HCT116 (cell line): ENCODE measurements at regions of chr16 and their contacts with region 1.

Region 1: GRCh38 chr16:15548482-15548891 is 94.5 kb downstream of the MARF1 start:
- DNase-seq: no peak
- ATAC-seq: no peak
- H3K4me3 ChIP-seq: no peak overlapping the region
- H3K27ac ChIP-seq: peak overlapping the region; percentile 10; the same call in 1 of the 2 replicates
- H3K4me1 ChIP-seq: peaks cover 11 to 66% of the 10 kb centered on the region in 2 experiments
- H3K27me3 ChIP-seq: no peaks in the 10 kb centered on the region
- CTCF ChIP-seq: no peak
- POLR2A ChIP-seq: no peak
- RAD21 ChIP-seq: no peak

Region 2: GRCh38 chr16:15398618-15399316 is 149.7 kb before region 1 on chr16:
- CTCF ChIA-PET with region 1: no interaction called
- POLR2A ChIA-PET with region 1: no interaction called
- RAD21 ChIA-PET with region 1: no interaction called
- intact Hi-C with region 1: no loop called
- DNase-seq: no peak
- ATAC-seq: no peak
- H3K4me3 ChIP-seq: no peak overlapping the region
- H3K27ac ChIP-seq: no peak overlapping the region
- H3K4me1 ChIP-seq: no peaks in the 10 kb centered on the region
- H3K27me3 ChIP-seq: no peaks in the 10 kb centered on the region
- CTCF ChIP-seq: no peak
- POLR2A ChIP-seq: no peak
- RAD21 ChIP-seq: no peak

Region 3: GRCh38 chr16:15434425-15435215 is 113.9 kb before region 1 on chr16 and contains the start of gene BMERB1:
- CTCF ChIA-PET with region 1: no interaction called
- POLR2A ChIA-PET with region 1: no interaction called
- RAD21 ChIA-PET with region 1: no interaction called
- intact Hi-C with region 1: no loop called
- DNase-seq: peak; percentile 12
- ATAC-seq: peak; percentile 76
- H3K4me3 ChIP-seq: peak within 1 kb of the TSS; percentile 68 to 71
- H3K27ac ChIP-seq: no peak within 1 kb of the TSS; the same call in 1 of the 2 replicates
- H3K4me1 ChIP-seq: peaks cover 18 to 34% of the 10 kb centered on the region in 2 experiments
- H3K27me3 ChIP-seq: no peaks in the 10 kb centered on the region
- CTCF ChIP-seq: no peak
- POLR2A ChIP-seq: no peak
- RAD21 ChIP-seq: no peak
- total RNA-seq, gene BMERB1: 43.6 TPM

Region 4: GRCh38 chr16:15559176-15559575 is 10.7 kb after region 1 on chr16:
- CTCF ChIA-PET with region 1: interaction called, 12 read pairs
- POLR2A ChIA-PET with region 1: interaction called, 3 read pairs
- RAD21 ChIA-PET with region 1: interaction called in 1 of 2 experiments, 3 read pairs
- intact Hi-C with region 1: no loop called
- DNase-seq: no peak
- ATAC-seq: no peak
- H3K4me3 ChIP-seq: no peak overlapping the region
- H3K27ac ChIP-seq: no peak overlapping the region
- H3K4me1 ChIP-seq: peaks cover 5 to 9% of the 10 kb centered on the region in 2 experiments; a peak in 3 of 4 replicates
- H3K27me3 ChIP-seq: no peaks in the 10 kb centered on the region
- CTCF ChIP-seq: no peak
- POLR2A ChIP-seq: no peak
- RAD21 ChIP-seq: no peak

Region 5: GRCh38 chr16:15564604-15565339 is 16.3 kb after region 1 on chr16:
- CTCF ChIA-PET with region 1: interaction called, 12 read pairs
- POLR2A ChIA-PET with region 1: interaction called, 3 read pairs
- RAD21 ChIA-PET with region 1: interaction called in 1 of 2 experiments, 3 read pairs
- intact Hi-C with region 1: no loop called
- DNase-seq: no peak
- ATAC-seq: no peak
- H3K4me3 ChIP-seq: no peak overlapping the region
- H3K27ac ChIP-seq: no peak overlapping the region
- H3K4me1 ChIP-seq: peaks cover 5 to 10% of the 10 kb centered on the region in 2 experiments; a peak in 3 of 4 replicates
- H3K27me3 ChIP-seq: no peaks in the 10 kb centered on the region
- CTCF ChIP-seq: no peak
- POLR2A ChIP-seq: no peak
- RAD21 ChIP-seq: no peak

Region 6: GRCh38 chr16:15631730-15632409 is 83.4 kb after region 1 on chr16:
- CTCF ChIA-PET with region 1: no interaction called
- POLR2A ChIA-PET with region 1: no interaction called
- RAD21 ChIA-PET with region 1: no interaction called
- intact Hi-C with region 1: no loop called
- DNase-seq: no peak
- ATAC-seq: no peak
- H3K4me3 ChIP-seq: no peak overlapping the region
- H3K27ac ChIP-seq: no peak overlapping the region
- H3K4me1 ChIP-seq: no peaks in the 10 kb centered on the region
- H3K27me3 ChIP-seq: no peaks in the 10 kb centered on the region
- CTCF ChIP-seq: no peak
- POLR2A ChIP-seq: no peak
- RAD21 ChIP-seq: no peak